ENCODE measurements at regions of chr12 and their contacts with region 1.

Region 1: DNA sequence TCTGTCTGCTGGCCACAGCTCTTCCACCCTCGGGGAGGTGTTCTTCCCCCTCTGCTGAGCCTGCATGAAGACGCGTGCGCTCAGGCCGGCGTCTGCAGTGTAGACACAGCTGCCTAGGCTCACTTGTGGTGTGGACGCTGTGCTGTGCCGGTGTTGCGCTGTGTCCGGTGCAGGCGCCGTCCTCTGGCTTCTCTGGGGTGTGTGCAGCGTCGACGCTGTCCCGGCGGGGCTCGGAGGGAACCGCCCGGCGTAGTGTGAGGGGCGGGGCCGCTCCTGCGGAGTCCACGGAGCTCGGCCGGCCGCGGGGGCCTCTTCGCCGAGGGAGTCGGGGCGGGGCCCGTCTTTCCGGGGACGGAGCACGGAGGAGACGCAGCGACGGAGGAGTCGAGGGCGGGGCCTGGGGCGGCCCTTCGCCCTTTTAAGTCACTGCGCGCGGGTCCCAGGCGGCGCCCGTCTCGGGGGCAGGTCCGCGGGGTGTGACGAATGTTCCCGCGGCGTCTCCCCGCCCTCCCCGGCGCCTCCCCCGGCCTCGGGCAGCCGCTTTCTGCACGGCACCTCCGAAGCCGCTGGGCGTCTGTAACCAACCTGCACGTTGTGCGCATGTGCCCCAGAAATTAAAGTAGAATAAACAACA is 45.2 kb downstream of the NOC4L start:
- DNase-seq: peak; percentile 87 to 96 (median 94)
- ATAC-seq: peak; percentile 80 to 84
- H3K4me3 Mint-ChIP-seq: peak overlapping the region; percentile 89 to 98 (median 95)
- H3K27ac Mint-ChIP-seq: peak overlapping the region; percentile 76 to 98 (median 96)
- H3K4me1 Mint-ChIP-seq: peaks cover 11 to 58% (median 52%) of the 10 kb centered on the region in 4 donors
- H3K27me3 Mint-ChIP-seq: no peaks in the 10 kb centered on the region

Region 2: GRCh38 chr12:132040906-132041606 is 148.4 kb before region 1 on chr12:
- POLR2A ChIA-PET with region 1: no interaction called
- DNase-seq: peak in 1 of 10 donors; percentile 47
- ATAC-seq: no peak
- H3K4me3 Mint-ChIP-seq: no peak overlapping the region
- H3K27ac Mint-ChIP-seq: peak overlapping the region in 7 of 10 donors; percentile 15 to 92 (median 48)
- H3K4me1 Mint-ChIP-seq: peaks cover 0 to 9% (median 7%) of the 10 kb centered on the region in 4 donors
- H3K27me3 Mint-ChIP-seq: no peaks in the 10 kb centered on the region

Region 3: GRCh38 chr12:132094381-132094803 is 95.1 kb before region 1 on chr12:
- POLR2A ChIA-PET with region 1: no interaction called
- DNase-seq: no peak
- ATAC-seq: no peak
- H3K4me3 Mint-ChIP-seq: no peak overlapping the region
- H3K27ac Mint-ChIP-seq: peak overlapping the region in 4 of 10 donors; percentile 25 to 98 (median 29)
- H3K4me1 Mint-ChIP-seq: peaks cover 8 to 33% (median 23%) of the 10 kb centered on the region in 4 donors
- H3K27me3 Mint-ChIP-seq: no peaks in the 10 kb centered on the region

Region 4: GRCh38 chr12:132153501-132154340 is 35.8 kb before region 1 on chr12:
- POLR2A ChIA-PET with region 1: interaction called, 12 read pairs
- DNase-seq: peak; percentile 61 to 86 (median 74)
- ATAC-seq: peak; percentile 94 to 96
- H3K4me3 Mint-ChIP-seq: peak overlapping the region in 8 of 10 donors; percentile 16 to 65 (median 52)
- H3K27ac Mint-ChIP-seq: peak overlapping the region in 4 of 10 donors; percentile 11 to 69 (median 41)
- H3K4me1 Mint-ChIP-seq: peaks cover 0 to 5% (median 0%) of the 10 kb centered on the region in 4 donors
- H3K27me3 Mint-ChIP-seq: no peaks in the 10 kb centered on the region

Region 5: GRCh38 chr12:132162508-132163031 is 26.9 kb before region 1 on chr12:
- POLR2A ChIA-PET with region 1: interaction called, 26 read pairs
- DNase-seq: peak in 6 of 10 donors; percentile 4 to 60 (median 38)
- ATAC-seq: peak; percentile 79 to 92
- H3K4me3 Mint-ChIP-seq: peak overlapping the region in 6 of 10 donors; percentile 13 to 69 (median 37)
- H3K27ac Mint-ChIP-seq: peak overlapping the region in 1 of 10 donors; percentile 82
- H3K4me1 Mint-ChIP-seq: peaks cover 8 to 31% (median 20%) of the 10 kb centered on the region in 4 donors
- H3K27me3 Mint-ChIP-seq: peaks cover 0 to 4% (median 2%) of the 10 kb centered on the region in 5 donors

Region 6: DNA sequence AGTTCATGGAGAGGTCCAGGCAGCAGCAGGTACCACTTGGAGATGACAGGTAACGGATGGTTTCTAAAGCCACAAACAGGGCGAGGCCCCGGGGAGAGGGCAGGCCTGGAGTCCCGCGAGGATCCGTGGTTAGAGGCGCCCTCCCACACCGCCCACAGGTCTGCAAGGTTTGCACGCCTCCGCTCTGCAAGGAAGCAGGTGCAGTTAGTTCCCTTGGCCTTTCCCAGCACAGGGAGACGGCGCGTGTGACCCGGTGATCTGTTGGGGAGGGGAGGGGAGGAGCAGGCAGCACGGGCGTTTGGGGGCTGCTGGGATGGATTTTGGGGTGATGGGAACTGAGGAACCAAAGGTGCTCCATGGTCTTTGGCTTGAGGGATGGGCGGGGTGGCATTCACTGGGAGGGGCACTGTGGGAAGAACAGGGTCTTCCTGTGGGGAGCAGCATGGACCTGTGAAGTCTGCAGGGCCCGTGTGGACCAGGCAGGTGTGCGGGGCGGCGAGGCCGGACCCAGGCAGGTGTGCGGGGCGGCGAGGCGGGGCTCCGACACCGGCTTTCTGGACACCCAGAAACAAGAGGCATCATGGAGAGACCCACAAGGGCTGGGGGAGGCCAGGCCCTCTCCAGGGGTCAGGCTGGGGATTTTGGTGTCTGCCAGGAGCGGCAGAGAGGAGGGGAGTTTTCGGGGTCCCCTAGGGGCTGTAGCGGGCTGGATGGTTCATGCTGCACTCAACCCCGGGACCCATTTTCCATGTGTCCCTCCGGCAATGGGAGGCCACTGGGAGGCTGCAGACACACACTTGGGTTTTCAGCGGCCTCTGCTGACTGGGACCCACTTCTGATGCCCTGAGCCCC is 16.1 kb before region 1 on chr12:
- POLR2A ChIA-PET with region 1: interaction called, 25 read pairs
- DNase-seq: peak in 2 of 10 donors; percentile 12 to 68
- ATAC-seq: peak; percentile 77 to 78
- H3K4me3 Mint-ChIP-seq: peak overlapping the region in 8 of 10 donors; percentile 6 to 80 (median 61)
- H3K27ac Mint-ChIP-seq: peak overlapping the region in 1 of 10 donors; percentile 62
- H3K4me1 Mint-ChIP-seq: peaks cover 14 to 25% (median 22%) of the 10 kb centered on the region in 4 donors
- H3K27me3 Mint-ChIP-seq: peaks cover 0 to 25% (median 3%) of the 10 kb centered on the region in 5 donors

Region 7: GRCh38 chr12:132178801-132179401 is 10.6 kb before region 1 on chr12:
- POLR2A ChIA-PET with region 1: interaction called, 25 read pairs
- DNase-seq: peak in 8 of 10 donors; percentile 20 to 77 (median 51)
- ATAC-seq: peak; percentile 82
- H3K4me3 Mint-ChIP-seq: peak overlapping the region; percentile 64 to 93 (median 85)
- H3K27ac Mint-ChIP-seq: peak overlapping the region; percentile 37 to 95 (median 84)
- H3K4me1 Mint-ChIP-seq: peaks cover 25 to 48% (median 32%) of the 10 kb centered on the region in 4 donors
- H3K27me3 Mint-ChIP-seq: peaks cover 0 to 10% (median 0%) of the 10 kb centered on the region in 5 donors

Region 8: GRCh38 chr12:132506328-132507160 is 317.0 kb after region 1 on chr12:
- POLR2A ChIA-PET with region 1: no interaction called
- DNase-seq: peak; percentile 48 to 83 (median 66)
- ATAC-seq: peak; percentile 85 to 86
- H3K4me3 Mint-ChIP-seq: peak overlapping the region; percentile 55 to 85 (median 68)
- H3K27ac Mint-ChIP-seq: peak overlapping the region; percentile 55 to 94 (median 88)
- H3K4me1 Mint-ChIP-seq: peaks cover 30 to 59% (median 56%) of the 10 kb centered on the region in 4 donors
- H3K27me3 Mint-ChIP-seq: no peaks in the 10 kb centered on the region

Measured in naive thymus-derived CD8-positive, alpha-beta T cell (primary cell).